IMR-90 (cell line): ENCODE measurements at regions of chr4 and their contacts with region 1.

Region 1: DNA sequence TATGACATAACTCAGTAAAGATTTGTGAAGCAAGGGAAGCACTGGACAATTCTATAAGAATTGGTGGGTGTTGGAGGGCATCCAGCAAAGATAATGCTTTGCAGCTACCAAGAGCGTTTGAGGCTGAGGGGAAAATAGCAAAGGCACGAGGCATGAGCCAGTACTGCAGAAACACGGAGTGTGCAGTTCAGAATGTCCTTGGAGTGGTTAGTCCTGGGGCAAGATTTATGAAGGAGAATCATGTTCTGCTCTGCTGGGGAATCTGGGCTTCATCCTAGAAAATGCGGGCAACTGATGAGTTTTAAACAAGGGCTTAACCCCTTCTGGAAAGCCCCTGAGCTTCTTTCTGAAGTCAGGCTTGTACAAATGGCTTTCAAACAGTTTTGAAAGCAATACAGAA is 452.5 kb downstream of the IL15 start:
- DNase-seq: peak; percentile 84
- ATAC-seq: peak; percentile 63
- H3K4me3 ChIP-seq: no peak overlapping the region
- H3K27ac ChIP-seq: peak overlapping the region; percentile 71; the same call in 1 of the 2 replicates
- H3K4me1 ChIP-seq: peaks cover 11% of the 10 kb centered on the region
- H3K27me3 ChIP-seq: no peaks in the 10 kb centered on the region
- CTCF ChIP-seq: no peak
- POLR2A ChIP-seq: no peak
- RAD21 ChIP-seq: no peak

Region 2: DNA sequence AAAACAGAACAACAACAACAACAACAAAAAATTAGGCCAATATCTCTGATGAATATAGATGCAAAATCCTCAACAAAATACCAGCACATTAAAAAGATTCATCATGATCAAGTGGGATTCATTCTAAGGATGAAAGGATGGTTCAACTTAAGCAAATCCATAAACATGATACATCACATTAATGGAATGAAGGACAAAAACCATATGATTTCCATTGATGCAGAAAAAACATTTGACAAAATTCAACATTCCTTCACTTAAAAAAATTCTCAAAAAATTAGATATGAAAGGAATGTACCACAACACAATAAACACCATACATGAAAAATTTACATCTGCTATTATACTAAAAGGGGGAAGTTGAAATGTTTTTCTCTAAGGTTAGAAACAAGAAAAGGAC is 349.3 kb before region 1 on chr4:
- CTCF ChIA-PET with region 1: no interaction called
- POLR2A ChIA-PET with region 1: no interaction called
- dilution Hi-C with region 1: no loop called
- in situ Hi-C with region 1: no loop called
- intact Hi-C with region 1: loop called (anchors 10 kb)
- DNase-seq: no peak
- ATAC-seq: no peak
- H3K4me3 ChIP-seq: no peak overlapping the region
- H3K27ac ChIP-seq: no peak overlapping the region
- H3K4me1 ChIP-seq: no peaks in the 10 kb centered on the region
- H3K27me3 ChIP-seq: no peaks in the 10 kb centered on the region
- CTCF ChIP-seq: no peak
- POLR2A ChIP-seq: no peak
- RAD21 ChIP-seq: no peak